Breast epithelium (tissue), 4 donors: ENCODE measurements at regions of chr1 and their contacts with region 1.

Region 1: GRCh38 chr1:44531785-44532566 is 126.9 kb downstream of the RNF220 start:
- DNase-seq: no peak
- H3K4me3 ChIP-seq: no peak overlapping the region
- H3K27ac ChIP-seq: no peak overlapping the region
- H3K4me1 ChIP-seq: no peaks in the 10 kb centered on the region
- H3K27me3 ChIP-seq: no peaks in the 10 kb centered on the region
- CTCF ChIP-seq: no peak
- POLR2A ChIP-seq: no peak

Region 2: GRCh38 chr1:44507490-44508396 is 24.2 kb before region 1 on chr1:
- intact Hi-C with region 1: loop called (anchors 1 kb)
- DNase-seq: no peak
- H3K4me3 ChIP-seq: no peak overlapping the region
- H3K27ac ChIP-seq: no peak overlapping the region
- H3K4me1 ChIP-seq: no peaks in the 10 kb centered on the region
- H3K27me3 ChIP-seq: peaks cover 0 to 19% of the 10 kb centered on the region in 2 donors
- CTCF ChIP-seq: no peak
- POLR2A ChIP-seq: no peak

Region 3: DNA sequence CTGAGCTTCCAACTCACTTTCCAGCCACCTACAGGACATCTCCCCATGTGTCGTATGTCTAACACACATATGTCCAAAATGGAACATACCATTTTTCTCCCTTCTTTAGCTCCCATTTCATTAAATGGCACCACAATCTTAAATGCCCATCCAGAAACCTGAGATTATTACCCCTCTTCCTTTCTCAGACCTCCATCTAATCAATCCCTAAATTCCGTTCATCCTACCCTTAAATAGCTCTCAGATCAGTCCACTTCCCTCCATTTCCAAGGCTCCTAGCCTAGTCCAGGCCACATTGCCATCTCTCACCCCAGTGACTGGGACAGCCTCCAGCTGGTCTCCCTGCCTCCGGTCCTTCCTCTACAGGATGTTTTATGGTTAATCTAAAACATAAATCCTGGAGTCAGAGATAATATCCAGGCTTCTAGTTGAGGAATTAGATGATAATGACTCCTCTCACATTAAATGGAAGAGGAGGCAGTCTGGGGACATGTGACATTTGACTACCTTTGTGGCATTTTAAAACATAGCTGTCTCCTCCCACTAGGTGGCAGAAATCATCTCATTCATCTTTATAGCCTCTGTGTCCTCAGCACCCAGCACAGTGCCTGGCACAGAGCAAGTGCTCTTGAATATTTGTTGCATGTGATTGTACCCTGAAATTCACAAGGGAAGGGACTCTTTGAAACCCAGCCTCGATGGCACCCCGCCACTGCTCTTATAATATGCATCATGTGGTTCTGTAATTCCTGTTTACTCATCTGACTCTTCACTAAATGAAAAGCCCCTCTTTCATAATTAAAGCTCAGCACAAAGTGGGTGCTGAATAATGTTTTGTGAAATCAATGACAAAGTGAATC is 40.0 kb after region 1 on chr1:
- intact Hi-C with region 1: no loop called
- DNase-seq: no peak
- H3K4me3 ChIP-seq: no peak overlapping the region
- H3K27ac ChIP-seq: no peak overlapping the region
- H3K4me1 ChIP-seq: no peaks in the 10 kb centered on the region
- H3K27me3 ChIP-seq: no peaks in the 10 kb centered on the region
- CTCF ChIP-seq: peak in 1 of 3 donors; percentile 17
- POLR2A ChIP-seq: no peak